ENCODE measurements at regions of chr2 and their contacts with region 1.

Region 1: GRCh38 chr2:216404010-216404618 is 8.2 kb upstream of the SMARCAL1 start:
- DNase-seq: peak in 4 of 5 donors; percentile 40 to 51 (median 43)
- H3K4me3 ChIP-seq: no peak overlapping the region
- H3K4me3 Mint-ChIP-seq: no peak overlapping the region
- H3K27ac ChIP-seq: no peak overlapping the region
- H3K27ac Mint-ChIP-seq: no peak overlapping the region
- H3K4me1 ChIP-seq: no peaks in the 10 kb centered on the region
- H3K4me1 Mint-ChIP-seq: peaks cover 0 to 1% (median under 1%) of the 10 kb centered on the region in 4 donors
- H3K27me3 ChIP-seq: peaks cover 3% of the 10 kb centered on the region
- H3K27me3 Mint-ChIP-seq: peaks cover 1 to 5% of the 10 kb centered on the region in 2 donors

Region 2: DNA sequence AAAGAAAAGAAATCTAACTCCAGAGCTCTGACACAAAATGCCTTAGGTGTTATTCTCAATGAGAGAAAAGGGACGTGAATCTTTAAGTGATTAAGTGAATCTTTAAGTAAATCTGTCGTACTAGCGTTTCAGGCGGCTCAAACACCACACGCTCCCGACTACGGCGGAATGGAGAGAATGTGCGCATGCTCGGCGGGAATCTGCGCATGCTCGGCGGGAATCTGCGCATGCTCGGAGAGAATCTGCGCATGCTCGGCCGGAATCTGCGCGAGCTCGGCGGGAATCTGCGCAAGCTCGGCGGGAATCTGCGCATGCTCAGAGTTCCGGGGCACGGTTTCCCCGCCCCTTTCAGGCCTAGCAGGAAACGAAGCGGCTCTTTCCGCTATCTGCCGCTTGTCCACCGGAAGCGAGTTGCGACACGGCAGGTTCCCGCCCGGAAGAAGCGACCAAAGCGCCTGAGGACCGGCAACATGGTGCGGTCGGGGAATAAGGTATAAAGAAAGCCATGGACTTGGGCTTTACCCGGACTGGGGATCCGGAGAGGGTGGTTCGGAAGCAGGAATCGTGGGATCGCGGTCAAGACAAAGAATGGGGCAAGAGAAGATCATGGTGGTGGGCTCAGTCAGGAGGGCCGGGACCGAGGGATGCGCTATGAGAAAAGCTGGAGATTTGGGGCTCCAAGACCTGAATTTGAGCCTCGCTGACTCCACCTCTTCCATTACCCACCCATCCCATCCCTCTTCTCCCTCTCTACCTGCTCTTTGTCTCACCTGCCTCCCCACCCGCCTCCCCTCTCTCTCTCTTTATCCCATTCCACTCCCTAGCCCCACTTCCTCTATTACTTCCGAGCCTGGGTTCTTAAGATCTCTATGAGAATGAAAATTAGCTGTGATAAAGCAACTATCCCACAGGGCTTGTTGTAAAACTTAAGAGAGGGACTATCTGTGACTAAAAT is 294.9 kb before region 1 on chr2 and contains the start of gene XRCC5:
- CTCF ChIA-PET with region 1: interaction called, 15 read pairs
- POLR2A ChIA-PET with region 1: no interaction called
- intact Hi-C with region 1: loop called (anchors 1 kb)
- DNase-seq: peak; percentile 95 to 98 (median 96)
- H3K4me3 ChIP-seq: peak within 1 kb of the TSS; percentile 94 to 95
- H3K4me3 Mint-ChIP-seq: peak within 1 kb of the TSS; percentile 99 to 100 (median 100)
- H3K27ac ChIP-seq: peak within 1 kb of the TSS; percentile 98
- H3K27ac Mint-ChIP-seq: peak within 1 kb of the TSS; percentile 99 to 100 (median 100)
- H3K4me1 ChIP-seq: peaks cover 51% of the 10 kb centered on the region
- H3K4me1 Mint-ChIP-seq: peaks cover 36 to 61% (median 49%) of the 10 kb centered on the region in 4 donors
- H3K27me3 ChIP-seq: no peaks in the 10 kb centered on the region
- H3K27me3 Mint-ChIP-seq: peaks cover 2 to 3% of the 10 kb centered on the region in 2 donors
- total RNA-seq, gene XRCC5: 235 to 240 TPM

Region 3: GRCh38 chr2:216222650-216223352 is 181.3 kb before region 1 on chr2:
- CTCF ChIA-PET with region 1: interaction called, 79 read pairs
- POLR2A ChIA-PET with region 1: no interaction called
- intact Hi-C with region 1: loop called (anchors 2 kb)
- DNase-seq: peak in 2 of 5 donors; percentile 5 to 10
- H3K4me3 ChIP-seq: no peak overlapping the region
- H3K4me3 Mint-ChIP-seq: no peak overlapping the region
- H3K27ac ChIP-seq: no peak overlapping the region
- H3K27ac Mint-ChIP-seq: peak overlapping the region in 4 of 7 donors; percentile 0 to 20 (median 1)
- H3K4me1 ChIP-seq: peaks cover 13% of the 10 kb centered on the region
- H3K4me1 Mint-ChIP-seq: peaks cover 10 to 18% (median 15%) of the 10 kb centered on the region in 4 donors
- H3K27me3 ChIP-seq: no peaks in the 10 kb centered on the region
- H3K27me3 Mint-ChIP-seq: no peaks in the 10 kb centered on the region

Region 4: GRCh38 chr2:216350214-216350789 is 53.8 kb before region 1 on chr2:
- CTCF ChIA-PET with region 1: interaction called, 66 read pairs
- POLR2A ChIA-PET with region 1: interaction called, 6 read pairs
- intact Hi-C with region 1: loop called (anchors 1 kb)
- DNase-seq: peak; percentile 19 to 57 (median 27)
- H3K4me3 ChIP-seq: no peak overlapping the region
- H3K4me3 Mint-ChIP-seq: peak overlapping the region in 7 of 8 donors; percentile 7 to 82 (median 37)
- H3K27ac ChIP-seq: no peak overlapping the region
- H3K27ac Mint-ChIP-seq: peak overlapping the region; percentile 25 to 88 (median 72)
- H3K4me1 ChIP-seq: peaks cover 79% of the 10 kb centered on the region
- H3K4me1 Mint-ChIP-seq: peaks cover 67 to 80% (median 73%) of the 10 kb centered on the region in 4 donors
- H3K27me3 ChIP-seq: no peaks in the 10 kb centered on the region
- H3K27me3 Mint-ChIP-seq: no peaks in the 10 kb centered on the region

Region 5: DNA sequence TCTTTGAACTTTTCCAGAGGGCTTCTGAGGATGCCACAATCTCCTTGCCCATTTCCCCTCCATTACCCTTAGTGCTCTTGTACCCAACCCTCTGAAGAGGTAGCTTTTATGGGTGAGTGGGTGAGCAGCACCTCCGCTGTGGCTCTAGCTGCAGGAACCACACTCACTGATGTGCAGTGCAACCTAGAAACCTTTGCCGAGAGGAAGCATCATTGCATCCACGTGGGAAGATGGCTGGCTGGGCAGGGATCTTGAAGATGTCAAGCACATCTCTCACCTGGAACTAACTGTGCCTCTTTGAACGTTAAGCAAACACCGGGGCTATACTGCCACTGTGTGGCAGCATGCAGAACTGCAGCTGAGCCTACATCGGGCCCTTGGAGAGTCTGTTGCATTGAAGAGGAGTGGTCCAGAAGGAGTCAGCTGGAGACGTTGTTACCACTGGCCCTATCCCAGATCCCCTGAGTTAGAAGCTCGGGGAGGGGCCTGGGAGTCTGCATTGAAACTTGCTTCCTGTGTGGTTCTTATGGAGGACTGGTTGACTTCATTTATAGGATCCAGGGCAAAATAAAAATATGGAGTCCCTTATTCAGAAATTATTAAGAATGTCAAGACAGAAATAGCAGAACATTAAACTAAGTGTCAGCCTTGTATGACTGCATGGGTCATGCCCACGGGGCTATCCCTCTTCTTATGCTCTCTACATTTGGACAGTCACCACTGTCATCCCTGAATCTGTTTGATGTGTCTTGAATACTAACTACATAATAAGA is 262.5 kb after region 1 on chr2:
- CTCF ChIA-PET with region 1: no interaction called
- POLR2A ChIA-PET with region 1: no interaction called
- intact Hi-C with region 1: loop called (anchors 5 kb)
- DNase-seq: peak; percentile 47 to 64 (median 54)
- H3K4me3 ChIP-seq: no peak overlapping the region
- H3K4me3 Mint-ChIP-seq: no peak overlapping the region
- H3K27ac ChIP-seq: no peak overlapping the region
- H3K27ac Mint-ChIP-seq: no peak overlapping the region
- H3K4me1 ChIP-seq: no peaks in the 10 kb centered on the region
- H3K4me1 Mint-ChIP-seq: no peaks in the 10 kb centered on the region
- H3K27me3 ChIP-seq: no peaks in the 10 kb centered on the region
- H3K27me3 Mint-ChIP-seq: peaks cover 0 to 17% of the 10 kb centered on the region in 2 donors

Measured in CD4-positive, alpha-beta memory T cell (primary cell).